Activated naive CD8-positive, alpha-beta T cell treated with anti-CD3 and anti-CD28 coated beads, Interleukin-2, amount 10 ng/mL, durations not matched to agents 7 days and 5 days (primary cell): ENCODE measurements at regions of chr13 and their contacts with region 1.

Region 1: DNA sequence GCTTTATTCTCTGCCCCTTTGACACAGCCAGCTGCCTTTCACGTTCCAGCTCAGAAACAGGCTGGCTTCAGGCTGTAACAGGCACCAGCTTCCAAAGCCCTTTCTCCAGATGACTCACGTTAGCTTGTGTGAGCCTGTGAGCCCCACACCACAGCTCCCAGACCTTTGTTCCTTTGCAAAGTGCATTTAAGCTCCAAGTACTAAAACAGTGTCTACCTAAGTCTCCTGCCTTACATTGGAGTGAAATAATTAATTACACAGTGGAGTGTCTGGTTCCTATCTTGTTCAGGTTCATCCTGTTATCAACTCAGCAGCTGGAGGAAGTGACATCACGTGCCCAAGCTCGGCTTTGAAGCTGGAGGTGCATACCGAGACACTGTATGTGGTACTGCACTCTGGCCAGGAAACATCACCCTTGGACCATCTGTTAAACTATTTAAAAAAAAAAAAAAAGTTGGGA is 475.8 kb downstream of the FOXO1 start:
- DNase-seq: peak; percentile 59
- ATAC-seq: peak; percentile 32
- H3K4me3 Mint-ChIP-seq: peak overlapping the region; percentile 80
- H3K27ac Mint-ChIP-seq: peak overlapping the region; percentile 97
- H3K4me1 Mint-ChIP-seq: peaks cover 58% of the 10 kb centered on the region
- H3K27me3 Mint-ChIP-seq: no peaks in the 10 kb centered on the region

Region 2: DNA sequence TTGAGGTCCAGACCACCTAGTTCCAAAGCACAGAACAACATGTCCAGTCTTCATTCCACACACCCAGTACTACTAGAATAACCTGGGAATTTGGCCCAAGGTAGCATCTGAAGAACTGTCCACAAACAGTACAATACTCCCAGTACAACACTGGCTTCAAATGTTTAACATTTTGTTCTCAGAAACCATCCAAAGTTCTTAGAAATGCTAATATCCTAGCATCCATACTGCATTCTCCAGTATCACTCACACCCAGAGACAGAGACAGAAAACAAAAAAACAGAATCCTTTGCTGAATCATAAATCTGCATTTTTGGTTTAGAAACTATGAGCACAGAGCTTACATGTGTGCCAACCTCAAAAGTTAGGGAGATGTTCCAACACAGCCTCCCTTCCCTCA is 15.0 kb before region 1 on chr13:
- POLR2A ChIA-PET with region 1: interaction called, 12 read pairs
- DNase-seq: no peak
- ATAC-seq: no peak
- H3K4me3 Mint-ChIP-seq: no peak overlapping the region
- H3K27ac Mint-ChIP-seq: no peak overlapping the region
- H3K4me1 Mint-ChIP-seq: peaks cover 14% of the 10 kb centered on the region
- H3K27me3 Mint-ChIP-seq: no peaks in the 10 kb centered on the region

Region 3: DNA sequence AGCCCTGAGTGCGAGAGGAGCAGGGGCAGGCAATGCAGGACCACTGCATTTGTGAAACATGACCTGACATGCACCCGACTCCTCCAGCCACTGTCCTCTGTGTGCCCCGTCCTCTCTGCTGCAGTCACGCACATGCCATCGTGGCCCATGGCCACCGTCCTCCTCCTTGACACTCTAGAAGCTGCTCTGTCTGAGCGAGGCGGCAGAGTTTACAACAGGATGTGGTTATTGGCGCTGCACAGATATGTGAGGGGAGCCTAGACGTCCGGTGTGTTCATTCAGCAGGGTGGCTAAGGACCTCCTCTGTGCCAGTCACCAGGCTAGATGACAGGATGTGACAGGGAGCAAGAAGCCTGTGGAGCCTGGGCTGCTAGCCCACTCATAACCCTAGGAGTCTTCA is 197.9 kb after region 1 on chr13:
- POLR2A ChIA-PET with region 1: interaction called, 14 read pairs
- DNase-seq: peak; percentile 77
- ATAC-seq: peak; percentile 98
- H3K4me3 Mint-ChIP-seq: peak overlapping the region; percentile 83
- H3K27ac Mint-ChIP-seq: peak overlapping the region; percentile 98
- H3K4me1 Mint-ChIP-seq: peaks cover 52% of the 10 kb centered on the region
- H3K27me3 Mint-ChIP-seq: no peaks in the 10 kb centered on the region